Psoas muscle (tissue), 8 donors: ENCODE measurements at regions of chr6 and their contacts with region 1.

Region 1: DNA sequence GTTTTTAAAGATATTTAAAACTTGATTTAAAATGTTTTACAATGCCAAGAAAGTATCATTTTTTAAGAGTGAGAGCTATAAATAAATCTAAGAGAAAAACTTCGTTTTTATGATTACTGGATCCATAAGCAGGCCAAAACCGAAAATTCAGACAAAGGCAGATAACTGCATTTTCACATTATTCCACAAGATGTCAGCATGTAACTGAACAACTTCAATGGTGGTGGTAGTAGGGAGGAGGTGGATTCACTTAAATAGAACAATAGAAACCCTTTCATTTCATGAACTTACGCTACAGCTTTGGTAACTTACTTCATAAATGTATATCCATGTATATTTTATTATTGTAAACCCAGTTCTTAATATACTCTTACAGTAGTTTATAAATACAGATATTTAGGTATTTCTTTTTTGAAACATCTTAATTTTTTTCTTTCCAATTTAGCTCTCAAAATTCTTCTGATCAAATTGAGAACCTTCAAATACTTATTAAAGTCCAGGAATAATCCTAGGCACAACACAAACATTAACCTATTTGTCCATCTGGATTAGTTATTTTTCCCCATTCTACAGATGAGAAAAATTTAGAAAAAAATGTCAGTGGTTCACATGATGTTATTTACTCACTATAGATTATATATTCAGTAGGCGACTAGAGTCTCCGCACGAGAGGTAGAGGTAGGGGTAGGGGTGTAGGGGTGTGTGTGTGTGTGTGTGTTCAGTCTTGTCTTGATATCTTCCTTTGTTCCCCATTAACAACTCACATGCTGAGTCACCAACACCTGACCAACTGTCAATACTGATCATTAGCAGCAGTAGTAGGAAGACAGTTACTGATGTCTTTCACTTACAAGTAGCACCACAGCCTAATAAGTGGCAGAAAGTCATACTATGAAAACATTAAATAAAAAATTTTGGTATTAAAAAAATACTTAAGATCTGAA is 111.5 kb downstream of the ARHGAP18 start:
- DNase-seq: no peak
- ATAC-seq: peak; percentile 68 to 93 (median 78)
- H3K4me3 ChIP-seq: no peak overlapping the region
- H3K27ac ChIP-seq: no peak overlapping the region
- H3K4me1 ChIP-seq: no peaks in the 10 kb centered on the region
- H3K27me3 ChIP-seq: no peaks in the 10 kb centered on the region
- CTCF ChIP-seq: peak; percentile 91

Region 2: DNA sequence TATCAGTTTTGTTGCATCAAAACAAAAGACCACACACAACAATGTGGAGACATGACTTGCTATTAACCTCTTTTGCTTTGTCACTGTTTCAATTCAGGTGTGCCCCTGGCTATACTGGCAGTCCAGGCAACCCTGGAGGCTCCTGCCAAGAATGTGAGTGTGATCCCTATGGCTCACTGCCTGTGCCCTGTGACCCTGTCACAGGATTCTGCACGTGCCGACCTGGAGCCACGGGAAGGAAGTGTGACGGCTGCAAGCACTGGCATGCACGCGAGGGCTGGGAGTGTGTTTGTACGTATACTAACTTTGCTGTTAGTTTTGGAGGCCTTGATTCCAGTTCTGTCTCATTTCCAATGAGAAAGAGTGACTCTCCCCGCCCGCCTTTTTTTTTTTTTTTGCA is 245.4 kb before region 1 on chr6:
- intact Hi-C with region 1: no loop called
- DNase-seq: no peak
- ATAC-seq: peak in 2 of 4 donors; percentile 38 to 40
- H3K4me3 ChIP-seq: no peak overlapping the region
- H3K27ac ChIP-seq: no peak overlapping the region
- H3K4me1 ChIP-seq: no peaks in the 10 kb centered on the region
- H3K27me3 ChIP-seq: no peaks in the 10 kb centered on the region
- CTCF ChIP-seq: no peak

Region 3: GRCh38 chr6:129730477-129731165 is 132.1 kb after region 1 on chr6:
- intact Hi-C with region 1: loop called (anchors 1 to 5 kb)
- DNase-seq: no peak
- ATAC-seq: peak; percentile 58 to 83 (median 62)
- H3K4me3 ChIP-seq: no peak overlapping the region
- H3K27ac ChIP-seq: no peak overlapping the region
- H3K4me1 ChIP-seq: no peaks in the 10 kb centered on the region
- H3K27me3 ChIP-seq: no peaks in the 10 kb centered on the region
- CTCF ChIP-seq: peak; percentile 80

Region 4: GRCh38 chr6:129936329-129937165 is 338.0 kb after region 1 on chr6:
- intact Hi-C with region 1: loop called in 1 of 2 experiments (anchors 10 kb)
- DNase-seq: no peak
- ATAC-seq: peak in 2 of 4 donors; percentile 52 to 54
- H3K4me3 ChIP-seq: no peak overlapping the region
- H3K27ac ChIP-seq: no peak overlapping the region
- H3K4me1 ChIP-seq: no peaks in the 10 kb centered on the region
- H3K27me3 ChIP-seq: peaks cover 0 to 3% (median 0%) of the 10 kb centered on the region in 3 donors
- CTCF ChIP-seq: peak; percentile 54

Region 5: GRCh38 chr6:130632277-130632676 is 1033.8 kb after region 1 on chr6:
- intact Hi-C with region 1: no loop called
- DNase-seq: no peak
- ATAC-seq: no peak
- H3K4me3 ChIP-seq: no peak overlapping the region
- H3K27ac ChIP-seq: no peak overlapping the region
- H3K4me1 ChIP-seq: no peaks in the 10 kb centered on the region
- H3K27me3 ChIP-seq: no peaks in the 10 kb centered on the region
- CTCF ChIP-seq: no peak